Tibial artery (tissue), 4 donors: ENCODE measurements at regions of chr16 and their contacts with region 1.

Region 1: DNA sequence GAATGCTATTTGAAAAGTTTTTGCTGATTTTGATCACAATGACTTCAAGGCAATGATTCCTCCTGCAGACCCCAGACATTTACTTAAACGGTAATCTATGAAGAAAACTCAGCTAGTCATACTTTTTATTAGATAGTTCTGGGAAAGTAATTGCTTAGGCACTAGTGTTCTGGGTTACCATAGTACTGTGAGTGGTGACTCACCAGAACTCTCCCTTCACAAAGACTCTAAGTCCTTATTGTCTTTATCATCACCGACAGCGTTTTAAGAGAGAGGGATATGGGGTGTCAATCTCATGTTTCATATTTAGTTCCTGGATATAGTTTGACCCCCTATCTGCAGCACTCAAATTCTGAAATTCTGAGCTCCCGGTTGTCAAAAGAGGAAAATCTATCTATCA is 43.0 kb upstream of the CDH8 start:
- DNase-seq: no peak
- H3K4me3 ChIP-seq: no peak overlapping the region
- H3K27ac ChIP-seq: no peak overlapping the region
- H3K4me1 ChIP-seq: no peaks in the 10 kb centered on the region
- H3K27me3 ChIP-seq: no peaks in the 10 kb centered on the region
- CTCF ChIP-seq: no peak

Region 2: GRCh38 chr16:60485872-60486489 is 1593.3 kb before region 1 on chr16:
- intact Hi-C with region 1: no loop called
- DNase-seq: no peak
- H3K4me3 ChIP-seq: no peak overlapping the region
- H3K27ac ChIP-seq: no peak overlapping the region
- H3K4me1 ChIP-seq: no peaks in the 10 kb centered on the region
- H3K27me3 ChIP-seq: no peaks in the 10 kb centered on the region
- CTCF ChIP-seq: no peak

Region 3: GRCh38 chr16:61344791-61345190 is 734.4 kb before region 1 on chr16:
- intact Hi-C with region 1: no loop called
- DNase-seq: no peak
- H3K4me3 ChIP-seq: no peak overlapping the region
- H3K27ac ChIP-seq: no peak overlapping the region
- H3K4me1 ChIP-seq: no peaks in the 10 kb centered on the region
- H3K27me3 ChIP-seq: no peaks in the 10 kb centered on the region
- CTCF ChIP-seq: no peak

Region 4: GRCh38 chr16:62066747-62067146 is 12.5 kb before region 1 on chr16:
- intact Hi-C with region 1: loop called (anchors 1 kb)
- DNase-seq: no peak
- H3K4me3 ChIP-seq: no peak overlapping the region
- H3K27ac ChIP-seq: no peak overlapping the region
- H3K4me1 ChIP-seq: no peaks in the 10 kb centered on the region
- H3K27me3 ChIP-seq: no peaks in the 10 kb centered on the region
- CTCF ChIP-seq: no peak

Region 5: GRCh38 chr16:62424206-62424605 is 345.0 kb after region 1 on chr16:
- intact Hi-C with region 1: no loop called
- DNase-seq: no peak
- H3K4me3 ChIP-seq: no peak overlapping the region
- H3K27ac ChIP-seq: no peak overlapping the region
- H3K4me1 ChIP-seq: no peaks in the 10 kb centered on the region
- H3K27me3 ChIP-seq: no peaks in the 10 kb centered on the region
- CTCF ChIP-seq: no peak